CD8-positive, alpha-beta T cell (primary cell): ENCODE measurements at regions of chr5 and their contacts with region 1.

Region 1: DNA sequence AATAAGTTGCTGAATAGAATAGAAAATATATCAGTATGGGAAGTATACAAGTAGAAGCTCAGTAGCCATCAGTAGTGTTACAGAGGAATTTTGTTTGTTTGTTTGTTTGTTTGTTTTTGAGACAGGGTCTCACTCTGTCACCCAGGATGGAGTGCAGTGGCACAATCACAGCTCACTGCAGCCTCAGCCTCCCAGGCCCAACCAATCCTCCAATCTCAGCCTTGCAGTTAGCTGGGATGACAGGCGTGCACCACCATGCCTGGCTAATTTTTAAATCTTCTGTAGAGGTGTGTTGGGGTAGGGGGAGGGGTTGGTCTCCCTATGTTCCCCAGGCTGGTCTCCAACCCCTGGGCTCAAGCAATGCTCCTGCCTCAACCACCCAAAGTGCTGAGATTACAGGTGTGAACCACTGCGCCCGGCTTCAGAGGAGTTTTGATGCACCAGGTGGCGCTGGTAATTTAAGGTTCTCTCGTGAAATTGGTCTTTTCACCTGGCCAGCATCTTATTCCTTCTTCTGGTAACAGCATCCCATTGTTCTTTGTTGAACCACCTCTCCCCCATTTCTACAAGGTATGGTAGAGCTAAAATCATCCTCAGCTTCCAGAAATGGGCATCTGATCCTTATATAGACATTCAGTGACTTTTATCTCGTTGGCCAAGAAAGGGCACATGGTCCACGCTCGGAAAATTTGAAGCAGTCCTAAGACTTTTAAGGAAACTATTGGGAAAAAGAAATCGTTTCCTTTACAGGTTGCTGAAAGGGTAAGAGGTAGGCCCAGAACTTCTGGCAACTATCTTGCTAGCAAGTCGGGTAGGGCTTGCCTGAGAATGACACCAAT is 157.1 kb downstream of the ARRDC3 start:
- DNase-seq: peak; percentile 13 to 77 (median 61)
- ATAC-seq: peak; percentile 63
- H3K4me3 ChIP-seq: no peak overlapping the region
- H3K4me3 Mint-ChIP-seq: no peak overlapping the region
- H3K27ac ChIP-seq: no peak overlapping the region
- H3K27ac Mint-ChIP-seq: no peak overlapping the region
- H3K4me1 ChIP-seq: no peaks in the 10 kb centered on the region
- H3K4me1 Mint-ChIP-seq: no peaks in the 10 kb centered on the region
- H3K27me3 ChIP-seq: no peaks in the 10 kb centered on the region
- H3K27me3 Mint-ChIP-seq: no peaks in the 10 kb centered on the region
- CTCF ChIP-seq: peak; percentile 53

Region 2: GRCh38 chr5:90932052-90932699 is 293.9 kb before region 1 on chr5:
- CTCF ChIA-PET with region 1: interaction called, 8 read pairs
- POLR2A ChIA-PET with region 1: no interaction called
- intact Hi-C with region 1: loop called (anchors 2 to 10 kb)
- DNase-seq: peak in 5 of 9 experiments; percentile 9 to 63 (median 27)
- ATAC-seq: no peak
- H3K4me3 ChIP-seq: no peak overlapping the region
- H3K4me3 Mint-ChIP-seq: no peak overlapping the region
- H3K27ac ChIP-seq: no peak overlapping the region
- H3K27ac Mint-ChIP-seq: no peak overlapping the region
- H3K4me1 ChIP-seq: no peaks in the 10 kb centered on the region
- H3K4me1 Mint-ChIP-seq: peaks cover 4% of the 10 kb centered on the region
- H3K27me3 ChIP-seq: no peaks in the 10 kb centered on the region
- H3K27me3 Mint-ChIP-seq: peaks cover 12% of the 10 kb centered on the region
- CTCF ChIP-seq: peak; percentile 70

Region 3: GRCh38 chr5:91266184-91266705 is 40.2 kb after region 1 on chr5:
- CTCF ChIA-PET with region 1: interaction called, 3 read pairs
- POLR2A ChIA-PET with region 1: no interaction called
- intact Hi-C with region 1: loop called in 1 of 2 experiments (anchors 5 kb)
- DNase-seq: peak in 2 of 9 experiments; percentile 11 to 31
- ATAC-seq: peak; percentile 52
- H3K4me3 ChIP-seq: no peak overlapping the region
- H3K4me3 Mint-ChIP-seq: no peak overlapping the region
- H3K27ac ChIP-seq: no peak overlapping the region
- H3K27ac Mint-ChIP-seq: no peak overlapping the region
- H3K4me1 ChIP-seq: peaks cover 8% of the 10 kb centered on the region
- H3K4me1 Mint-ChIP-seq: peaks cover 16% of the 10 kb centered on the region
- H3K27me3 ChIP-seq: no peaks in the 10 kb centered on the region
- H3K27me3 Mint-ChIP-seq: no peaks in the 10 kb centered on the region
- CTCF ChIP-seq: no peak

Region 4: GRCh38 chr5:91311697-91312501 is 85.8 kb after region 1 on chr5:
- CTCF ChIA-PET with region 1: interaction called, 3 read pairs
- POLR2A ChIA-PET with region 1: no interaction called
- intact Hi-C with region 1: loop called (anchors 2 to 5 kb)
- DNase-seq: peak; percentile 30 to 91 (median 73)
- ATAC-seq: peak; percentile 72
- H3K4me3 ChIP-seq: no peak overlapping the region
- H3K4me3 Mint-ChIP-seq: peak overlapping the region; percentile 49
- H3K27ac ChIP-seq: peak overlapping the region; percentile 40 to 75
- H3K27ac Mint-ChIP-seq: peak overlapping the region; percentile 93
- H3K4me1 ChIP-seq: peaks cover 39% of the 10 kb centered on the region
- H3K4me1 Mint-ChIP-seq: peaks cover 49% of the 10 kb centered on the region
- H3K27me3 ChIP-seq: no peaks in the 10 kb centered on the region
- H3K27me3 Mint-ChIP-seq: no peaks in the 10 kb centered on the region
- CTCF ChIP-seq: no peak

Region 5: GRCh38 chr5:91332267-91333045 is 106.4 kb after region 1 on chr5:
- CTCF ChIA-PET with region 1: no interaction called
- POLR2A ChIA-PET with region 1: no interaction called
- intact Hi-C with region 1: no loop called
- DNase-seq: peak in 3 of 9 experiments; percentile 12 to 26 (median 14)
- ATAC-seq: peak; percentile 58
- H3K4me3 ChIP-seq: no peak overlapping the region
- H3K4me3 Mint-ChIP-seq: no peak overlapping the region
- H3K27ac ChIP-seq: no peak overlapping the region
- H3K27ac Mint-ChIP-seq: no peak overlapping the region
- H3K4me1 ChIP-seq: no peaks in the 10 kb centered on the region
- H3K4me1 Mint-ChIP-seq: peaks cover 13% of the 10 kb centered on the region
- H3K27me3 ChIP-seq: no peaks in the 10 kb centered on the region
- H3K27me3 Mint-ChIP-seq: no peaks in the 10 kb centered on the region
- CTCF ChIP-seq: no peak